ENCODE measurements at regions of chr7 and their contacts with region 1.

Region 1: GRCh38 chr7:87219545-87220025 is at the start of gene TMEM243:
- DNase-seq: peak; percentile 94
- ATAC-seq: peak; percentile 66
- H3K4me3 ChIP-seq: peak within 1 kb of the TSS; percentile 87 to 99 (median 97)
- H3K4me3 Mint-ChIP-seq: peak within 1 kb of the TSS; percentile 99
- H3K27ac ChIP-seq: peak within 1 kb of the TSS; percentile 93 to 95
- H3K27ac Mint-ChIP-seq: peak within 1 kb of the TSS; percentile 100
- H3K4me1 ChIP-seq: peaks cover 45 to 49% of the 10 kb centered on the region in 2 donors
- H3K4me1 Mint-ChIP-seq: peaks cover 45% of the 10 kb centered on the region
- H3K27me3 ChIP-seq: peaks cover 0 to 4% (median 0%) of the 10 kb centered on the region in 4 experiments
- H3K27me3 Mint-ChIP-seq: no peaks in the 10 kb centered on the region
- CTCF ChIP-seq: peak; percentile 39
- total RNA-seq, gene TMEM243: 164 and 171 TPM in 2 replicates

Region 2: DNA sequence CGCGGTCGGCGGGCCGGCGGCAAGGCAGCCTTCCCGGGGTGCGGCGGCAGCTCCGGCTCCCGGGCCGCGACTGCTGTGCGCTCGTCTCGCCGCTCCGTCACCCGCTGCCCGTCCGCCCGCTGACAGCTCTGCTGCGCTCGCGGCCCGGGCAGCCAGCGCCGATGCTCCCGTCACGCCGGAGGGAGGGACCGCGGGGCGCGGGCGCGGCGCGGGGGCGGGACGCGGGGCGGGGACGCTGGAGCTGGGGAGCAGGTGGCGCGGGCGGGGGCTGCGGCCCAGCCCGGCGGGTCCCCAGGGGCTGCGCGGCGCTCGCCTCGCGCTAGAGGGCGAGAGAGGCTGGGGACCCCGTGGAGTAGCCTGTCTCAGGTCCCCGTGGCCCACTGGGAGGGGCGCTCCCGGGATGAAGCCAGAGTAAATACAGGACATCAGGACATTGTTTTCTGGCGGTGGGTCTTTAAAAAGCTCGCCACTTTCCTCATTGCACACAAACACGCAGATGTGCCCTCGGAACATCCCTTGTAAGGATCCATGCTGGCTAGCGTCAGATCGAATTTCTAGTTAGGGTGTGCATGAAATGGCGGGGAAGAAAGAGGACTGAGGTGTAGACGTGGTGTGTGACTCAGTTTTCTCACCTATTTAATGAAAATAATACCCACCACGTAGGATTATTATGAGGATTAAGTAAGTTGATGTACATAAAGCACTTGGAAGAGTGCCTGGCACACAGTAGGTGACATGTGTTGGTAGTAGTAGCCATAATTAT is 159.9 kb before region 1 on chr7 and contains the start of gene ELAPOR2:
- CTCF ChIA-PET with region 1: interaction called, 5 read pairs
- POLR2A ChIA-PET with region 1: no interaction called
- intact Hi-C with region 1: loop called (anchors 1 kb)
- DNase-seq: peak; percentile 91
- ATAC-seq: peak; percentile 95
- H3K4me3 ChIP-seq: peak within 1 kb of the TSS; percentile 42 to 79 (median 66)
- H3K4me3 Mint-ChIP-seq: peak within 1 kb of the TSS; percentile 90
- H3K27ac ChIP-seq: peak within 1 kb of the TSS in 1 of 2 donors; percentile 56
- H3K27ac Mint-ChIP-seq: peak within 1 kb of the TSS; percentile 77
- H3K4me1 ChIP-seq: peaks cover 12 to 14% of the 10 kb centered on the region in 2 donors
- H3K4me1 Mint-ChIP-seq: peaks cover 15% of the 10 kb centered on the region
- H3K27me3 ChIP-seq: peaks cover 0 to 3% (median 0%) of the 10 kb centered on the region in 4 experiments
- H3K27me3 Mint-ChIP-seq: no peaks in the 10 kb centered on the region
- CTCF ChIP-seq: peak; percentile 67
- total RNA-seq, gene ELAPOR2: 8.3 and 11.1 TPM in 2 replicates

Region 3: DNA sequence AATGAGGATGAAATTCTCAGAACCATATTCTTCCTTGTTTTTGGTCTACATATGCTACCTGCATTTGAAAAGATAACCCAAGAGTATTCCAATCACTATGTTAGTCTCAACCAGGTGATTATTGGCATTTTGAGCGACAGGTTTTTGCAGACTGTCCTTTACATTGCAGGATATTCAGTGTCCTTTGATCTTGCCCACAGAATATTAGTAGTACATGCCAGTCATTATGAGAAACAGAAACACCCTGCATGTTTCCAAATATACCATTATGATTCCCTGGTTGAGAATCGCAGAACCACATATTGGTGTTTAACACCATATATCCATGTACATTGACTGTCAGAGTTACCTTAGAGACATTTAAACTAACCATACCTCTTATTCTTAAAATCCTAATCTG is 30.7 kb before region 1 on chr7:
- CTCF ChIA-PET with region 1: interaction called, 6 read pairs
- POLR2A ChIA-PET with region 1: interaction called, 6 read pairs
- intact Hi-C with region 1: loop called (anchors 5 kb)
- DNase-seq: no peak
- ATAC-seq: no peak
- H3K4me3 ChIP-seq: no peak overlapping the region
- H3K4me3 Mint-ChIP-seq: no peak overlapping the region
- H3K27ac ChIP-seq: peak overlapping the region in 1 of 2 donors; percentile 33
- H3K27ac Mint-ChIP-seq: peak overlapping the region; percentile 78
- H3K4me1 ChIP-seq: no peaks in the 10 kb centered on the region
- H3K4me1 Mint-ChIP-seq: peaks cover 29% of the 10 kb centered on the region
- H3K27me3 ChIP-seq: no peaks in the 10 kb centered on the region
- H3K27me3 Mint-ChIP-seq: no peaks in the 10 kb centered on the region
- CTCF ChIP-seq: no peak

Region 4: GRCh38 chr7:87231256-87231655 is 11.7 kb after region 1 on chr7:
- CTCF ChIA-PET with region 1: interaction called, 10 read pairs
- POLR2A ChIA-PET with region 1: no interaction called
- intact Hi-C with region 1: loop called (anchors 2 kb)
- DNase-seq: no peak
- ATAC-seq: no peak
- H3K4me3 ChIP-seq: no peak overlapping the region
- H3K4me3 Mint-ChIP-seq: no peak overlapping the region
- H3K27ac ChIP-seq: no peak overlapping the region
- H3K27ac Mint-ChIP-seq: no peak overlapping the region
- H3K4me1 ChIP-seq: peaks cover 3 to 8% of the 10 kb centered on the region in 2 donors
- H3K4me1 Mint-ChIP-seq: peaks cover 8% of the 10 kb centered on the region
- H3K27me3 ChIP-seq: peaks cover 0 to 2% (median 0%) of the 10 kb centered on the region in 4 experiments
- H3K27me3 Mint-ChIP-seq: no peaks in the 10 kb centered on the region
- CTCF ChIP-seq: no peak

Region 5: DNA sequence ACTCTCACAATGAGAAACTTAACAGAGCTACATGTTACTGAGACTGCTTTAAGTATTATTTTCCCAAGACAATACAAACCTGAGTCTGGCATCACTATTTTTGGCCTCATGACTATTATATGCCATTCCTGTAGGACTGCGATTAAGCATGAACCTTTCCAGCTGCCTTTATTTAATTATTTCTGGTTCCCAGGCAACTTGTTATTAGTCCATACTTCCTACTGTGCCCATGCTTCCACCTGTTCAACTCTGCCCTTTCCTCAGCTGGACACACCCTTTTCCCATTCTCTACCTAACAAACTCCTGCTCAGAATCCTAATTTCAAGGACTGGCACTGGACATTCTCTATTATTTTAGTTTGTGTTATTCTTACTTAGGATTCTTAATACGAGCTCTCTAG is 117.7 kb after region 1 on chr7:
- CTCF ChIA-PET with region 1: no interaction called
- POLR2A ChIA-PET with region 1: no interaction called
- intact Hi-C with region 1: no loop called
- DNase-seq: no peak
- ATAC-seq: no peak
- H3K4me3 ChIP-seq: no peak overlapping the region
- H3K4me3 Mint-ChIP-seq: no peak overlapping the region
- H3K27ac ChIP-seq: no peak overlapping the region
- H3K27ac Mint-ChIP-seq: no peak overlapping the region
- H3K4me1 ChIP-seq: no peaks in the 10 kb centered on the region
- H3K4me1 Mint-ChIP-seq: no peaks in the 10 kb centered on the region
- H3K27me3 ChIP-seq: no peaks in the 10 kb centered on the region
- H3K27me3 Mint-ChIP-seq: no peaks in the 10 kb centered on the region
- CTCF ChIP-seq: no peak

Region 6: GRCh38 chr7:87474533-87475358 is 255.2 kb after region 1 on chr7:
- CTCF ChIA-PET with region 1: no interaction called
- POLR2A ChIA-PET with region 1: no interaction called
- intact Hi-C with region 1: loop called (anchors 2 kb)
- DNase-seq: peak; percentile 89
- ATAC-seq: peak; percentile 68
- H3K4me3 ChIP-seq: peak overlapping the region; percentile 54 to 87 (median 73)
- H3K4me3 Mint-ChIP-seq: peak overlapping the region; percentile 93
- H3K27ac ChIP-seq: peak overlapping the region; percentile 87 to 92
- H3K27ac Mint-ChIP-seq: peak overlapping the region; percentile 97
- H3K4me1 ChIP-seq: peaks cover 29 to 42% of the 10 kb centered on the region in 2 donors
- H3K4me1 Mint-ChIP-seq: peaks cover 46% of the 10 kb centered on the region
- H3K27me3 ChIP-seq: no peaks in the 10 kb centered on the region
- H3K27me3 Mint-ChIP-seq: no peaks in the 10 kb centered on the region
- CTCF ChIP-seq: no peak

Region 7: GRCh38 chr7:87876040-87876868 is 656.7 kb after region 1 on chr7 and contains the starts of genes DBF4 and SLC25A40:
- CTCF ChIA-PET with region 1: no interaction called
- POLR2A ChIA-PET with region 1: no interaction called
- intact Hi-C with region 1: loop called (anchors 1 kb)
- DNase-seq: peak; percentile 98
- ATAC-seq: peak; percentile 92
- H3K4me3 ChIP-seq: peak within 1 kb of the TSS; percentile 73 to 98 (median 93)
- H3K4me3 Mint-ChIP-seq: peak within 1 kb of the TSS; percentile 76
- H3K27ac ChIP-seq: peak within 1 kb of the TSS; percentile 83 to 93
- H3K27ac Mint-ChIP-seq: peak within 1 kb of the TSS; percentile 98
- H3K4me1 ChIP-seq: peaks cover 18 to 24% of the 10 kb centered on the region in 2 donors
- H3K4me1 Mint-ChIP-seq: peaks cover 37% of the 10 kb centered on the region
- H3K27me3 ChIP-seq: no peaks in the 10 kb centered on the region
- H3K27me3 Mint-ChIP-seq: no peaks in the 10 kb centered on the region
- CTCF ChIP-seq: no peak
- total RNA-seq, gene DBF4: 21.0 and 27.6 TPM in 2 replicates
- total RNA-seq, gene SLC25A40: 28.1 and 34.5 TPM in 2 replicates

Measured in B cell (primary cell).